ENCODE measurements at regions of chr12 and their contacts with region 1.

Region 1: GRCh38 chr12:94101738-94102660 is 46.4 kb upstream of the PLXNC1 start:
- DNase-seq: peak; percentile 91
- H3K4me3 Mint-ChIP-seq: peak overlapping the region; percentile 75
- H3K27ac Mint-ChIP-seq: peak overlapping the region; percentile 35
- H3K4me1 Mint-ChIP-seq: peaks cover 24% of the 10 kb centered on the region
- H3K27me3 Mint-ChIP-seq: no peaks in the 10 kb centered on the region

Region 2: GRCh38 chr12:93387780-93388179 is 714.2 kb before region 1 on chr12:
- CTCF ChIA-PET with region 1: interaction called, 14 read pairs
- POLR2A ChIA-PET with region 1: no interaction called
- intact Hi-C with region 1: loop called (anchors 5 kb)
- DNase-seq: peak; percentile 83
- H3K4me3 Mint-ChIP-seq: no peak overlapping the region
- H3K27ac Mint-ChIP-seq: peak overlapping the region; percentile 67
- H3K4me1 Mint-ChIP-seq: peaks cover 62% of the 10 kb centered on the region
- H3K27me3 Mint-ChIP-seq: no peaks in the 10 kb centered on the region

Region 3: DNA sequence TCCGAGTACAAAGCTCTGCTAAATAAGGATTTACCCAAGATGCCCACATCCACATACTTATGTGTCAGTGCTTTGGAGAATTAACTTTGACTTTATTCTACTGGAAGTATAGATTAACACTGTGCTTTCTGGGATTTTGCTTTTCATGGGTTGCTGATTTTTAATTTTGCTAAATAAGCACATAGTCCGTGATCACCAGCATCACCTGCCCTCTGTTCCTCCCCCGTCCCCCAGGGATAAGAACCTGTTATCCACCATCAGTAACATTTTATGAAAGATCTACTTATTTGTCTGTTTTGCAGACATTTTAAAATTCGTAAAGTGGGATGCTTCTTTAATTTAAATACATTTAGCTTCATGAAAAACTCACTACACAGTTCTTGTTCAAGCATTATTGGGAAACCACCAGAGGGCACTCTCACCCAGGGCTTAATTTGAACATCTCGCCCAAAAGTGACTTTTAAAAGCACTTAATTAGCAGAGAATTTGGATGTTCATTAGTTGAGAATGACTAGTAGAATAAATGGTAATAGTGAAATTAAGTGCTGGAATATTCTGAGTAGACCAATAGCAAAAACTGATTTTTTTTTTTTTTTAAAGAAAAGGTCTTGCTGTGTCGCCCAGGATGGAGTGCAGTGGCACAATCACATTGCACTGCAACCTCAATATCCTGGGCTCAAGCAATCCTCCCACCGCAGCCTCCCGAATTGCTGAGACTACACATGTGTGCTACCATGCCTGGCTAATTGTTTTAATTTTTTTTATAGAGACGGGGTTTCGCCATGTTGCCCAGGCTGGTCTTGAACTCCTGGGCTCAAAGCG is 599.0 kb before region 1 on chr12:
- CTCF ChIA-PET with region 1: interaction called, 304 read pairs
- POLR2A ChIA-PET with region 1: interaction called, 3 read pairs
- intact Hi-C with region 1: loop called (anchors 2 kb)
- DNase-seq: peak; percentile 64
- H3K4me3 Mint-ChIP-seq: no peak overlapping the region
- H3K27ac Mint-ChIP-seq: no peak overlapping the region
- H3K4me1 Mint-ChIP-seq: peaks cover 10% of the 10 kb centered on the region
- H3K27me3 Mint-ChIP-seq: no peaks in the 10 kb centered on the region

Region 4: GRCh38 chr12:93742110-93742934 is 359.7 kb before region 1 on chr12:
- CTCF ChIA-PET with region 1: interaction called, 30 read pairs
- POLR2A ChIA-PET with region 1: no interaction called
- intact Hi-C with region 1: no loop called
- DNase-seq: peak; percentile 77
- H3K4me3 Mint-ChIP-seq: peak overlapping the region; percentile 74
- H3K27ac Mint-ChIP-seq: peak overlapping the region; percentile 81
- H3K4me1 Mint-ChIP-seq: peaks cover 35% of the 10 kb centered on the region
- H3K27me3 Mint-ChIP-seq: no peaks in the 10 kb centered on the region

Region 5: GRCh38 chr12:93785262-93786010 is 316.6 kb before region 1 on chr12:
- CTCF ChIA-PET with region 1: interaction called, 15 read pairs
- POLR2A ChIA-PET with region 1: no interaction called
- intact Hi-C with region 1: loop called (anchors 5 kb)
- DNase-seq: peak; percentile 73
- H3K4me3 Mint-ChIP-seq: peak overlapping the region; percentile 16
- H3K27ac Mint-ChIP-seq: peak overlapping the region; percentile 81
- H3K4me1 Mint-ChIP-seq: peaks cover 57% of the 10 kb centered on the region
- H3K27me3 Mint-ChIP-seq: no peaks in the 10 kb centered on the region

Region 6: DNA sequence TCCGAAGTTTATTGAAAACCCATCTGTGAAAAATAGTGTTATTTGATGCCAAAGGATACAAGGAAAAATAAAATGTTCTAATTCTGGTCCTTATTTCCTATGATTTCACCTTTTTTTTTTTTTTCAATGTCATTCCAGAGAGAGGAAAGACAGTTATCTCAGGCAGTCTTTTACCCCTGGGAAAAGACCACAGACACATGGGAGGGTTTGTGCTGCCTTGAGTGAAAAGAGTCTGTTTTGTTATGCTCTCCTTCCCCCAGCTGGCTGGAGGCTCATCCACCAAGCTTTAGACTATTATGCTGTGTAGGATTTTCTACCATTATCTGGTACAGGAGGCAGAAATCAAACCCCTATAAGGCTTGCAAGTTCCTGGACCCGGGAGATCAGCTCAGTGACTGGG is 273.0 kb before region 1 on chr12:
- CTCF ChIA-PET with region 1: no interaction called
- POLR2A ChIA-PET with region 1: no interaction called
- intact Hi-C with region 1: no loop called
- DNase-seq: no peak
- H3K4me3 Mint-ChIP-seq: no peak overlapping the region
- H3K27ac Mint-ChIP-seq: no peak overlapping the region
- H3K4me1 Mint-ChIP-seq: peaks cover 5% of the 10 kb centered on the region
- H3K27me3 Mint-ChIP-seq: no peaks in the 10 kb centered on the region

Region 7: DNA sequence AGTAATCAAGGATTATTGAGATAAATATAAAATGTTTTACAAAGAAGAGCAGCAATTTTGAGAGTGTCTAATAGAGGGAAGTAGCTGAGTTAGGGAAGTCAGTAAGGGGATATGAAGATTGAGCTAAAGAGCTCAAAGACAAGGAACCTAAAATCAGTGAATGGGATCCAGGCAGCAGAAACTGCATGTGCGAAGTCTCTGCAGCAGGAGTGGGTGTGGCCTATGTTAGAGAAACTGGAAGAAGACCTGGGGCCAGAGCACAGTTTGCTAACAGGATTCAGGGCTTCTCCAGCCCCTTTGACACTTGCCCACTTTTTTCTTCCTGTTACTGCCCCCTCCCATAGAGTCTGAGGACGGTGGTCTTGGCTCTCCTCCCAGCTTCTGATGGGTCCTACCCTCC is 10.1 kb after region 1 on chr12:
- CTCF ChIA-PET with region 1: interaction called, 25 read pairs
- POLR2A ChIA-PET with region 1: no interaction called
- intact Hi-C with region 1: no loop called
- DNase-seq: no peak
- H3K4me3 Mint-ChIP-seq: no peak overlapping the region
- H3K27ac Mint-ChIP-seq: no peak overlapping the region
- H3K4me1 Mint-ChIP-seq: peaks cover 12% of the 10 kb centered on the region
- H3K27me3 Mint-ChIP-seq: no peaks in the 10 kb centered on the region

Region 8: GRCh38 chr12:94386422-94386821 is 284.4 kb after region 1 on chr12:
- CTCF ChIA-PET with region 1: no interaction called
- POLR2A ChIA-PET with region 1: no interaction called
- intact Hi-C with region 1: no loop called
- DNase-seq: no peak
- H3K4me3 Mint-ChIP-seq: no peak overlapping the region
- H3K27ac Mint-ChIP-seq: no peak overlapping the region
- H3K4me1 Mint-ChIP-seq: peaks cover 21% of the 10 kb centered on the region
- H3K27me3 Mint-ChIP-seq: no peaks in the 10 kb centered on the region